CD4-positive, alpha-beta T cell (primary cell): ENCODE measurements at regions of chr5 and their contacts with region 1.

Region 1: GRCh38 chr5:99032234-99033013 is 103.6 kb upstream of the CHD1 start:
- DNase-seq: peak in 9 of 14 experiments; percentile 5 to 67 (median 21)
- ATAC-seq: peak; percentile 25
- H3K4me3 ChIP-seq: peak overlapping the region; percentile 56
- H3K4me3 Mint-ChIP-seq: peak overlapping the region; percentile 90
- H3K27ac ChIP-seq: peak overlapping the region; percentile 29 to 91
- H3K27ac Mint-ChIP-seq: peak overlapping the region; percentile 94
- H3K4me1 ChIP-seq: peaks cover 25% of the 10 kb centered on the region
- H3K4me1 Mint-ChIP-seq: peaks cover 78% of the 10 kb centered on the region
- H3K27me3 ChIP-seq: no peaks in the 10 kb centered on the region
- H3K27me3 Mint-ChIP-seq: no peaks in the 10 kb centered on the region
- CTCF ChIP-seq: peak; percentile 53

Region 2: DNA sequence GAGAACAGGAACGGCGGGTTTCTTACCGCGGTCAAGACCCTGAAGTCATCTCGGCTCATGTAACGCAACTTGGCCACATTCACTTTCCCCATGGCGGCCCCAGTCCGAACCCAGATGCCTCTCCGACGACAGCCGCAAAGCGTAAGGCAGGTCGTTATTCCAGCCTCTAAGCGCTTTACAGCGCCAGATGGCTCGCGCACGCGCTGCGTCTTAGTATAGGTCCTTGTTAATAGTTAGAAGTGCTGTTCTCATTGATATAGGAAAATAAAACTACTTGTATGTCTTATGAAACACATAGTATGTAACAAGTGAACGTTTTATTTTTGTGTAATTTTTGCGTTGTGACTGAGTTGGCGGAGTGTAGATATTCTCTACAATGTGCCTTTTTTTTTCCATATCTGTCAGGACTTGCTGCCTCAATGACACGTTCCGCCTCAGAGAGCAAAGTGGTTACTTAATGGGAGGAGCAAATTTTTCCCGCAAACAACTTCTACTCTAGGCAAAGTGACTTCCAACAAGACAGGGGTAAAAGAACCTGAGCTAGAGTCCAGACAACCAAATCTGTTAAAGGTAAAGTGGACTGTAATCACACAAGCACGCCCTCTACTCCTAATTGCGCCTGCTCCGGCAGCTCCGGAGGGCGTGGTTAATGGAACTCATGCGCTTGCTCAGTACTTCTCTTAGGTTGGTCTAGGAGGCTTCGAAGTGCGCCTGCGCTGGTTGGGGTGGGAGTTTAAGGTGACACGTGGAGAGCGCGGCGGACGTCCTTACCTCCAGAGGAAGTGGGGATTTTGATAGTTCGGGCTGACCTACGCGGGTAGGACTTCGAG is 1849.1 kb before region 1 on chr5 and contains the start of gene RIOK2:
- CTCF ChIA-PET with region 1: no interaction called
- POLR2A ChIA-PET with region 1: no interaction called
- intact Hi-C with region 1: loop called in 1 of 2 experiments (anchors 10 kb)
- DNase-seq: peak; percentile 81 to 96 (median 90)
- ATAC-seq: peak; percentile 91
- H3K4me3 ChIP-seq: peak within 1 kb of the TSS; percentile 73
- H3K4me3 Mint-ChIP-seq: peak within 1 kb of the TSS; percentile 97
- H3K27ac ChIP-seq: peak within 1 kb of the TSS; percentile 90 to 96
- H3K27ac Mint-ChIP-seq: peak within 1 kb of the TSS; percentile 98
- H3K4me1 ChIP-seq: peaks cover 11% of the 10 kb centered on the region
- H3K4me1 Mint-ChIP-seq: peaks cover 44% of the 10 kb centered on the region
- H3K27me3 ChIP-seq: no peaks in the 10 kb centered on the region
- H3K27me3 Mint-ChIP-seq: no peaks in the 10 kb centered on the region
- CTCF ChIP-seq: no peak
- total RNA-seq, gene RIOK2: 25.1 to 26.0 TPM

Region 3: GRCh38 chr5:97936231-97936630 is 1096.2 kb before region 1 on chr5:
- CTCF ChIA-PET with region 1: no interaction called
- POLR2A ChIA-PET with region 1: no interaction called
- intact Hi-C with region 1: no loop called
- DNase-seq: no peak
- ATAC-seq: no peak
- H3K4me3 ChIP-seq: no peak overlapping the region
- H3K4me3 Mint-ChIP-seq: no peak overlapping the region
- H3K27ac ChIP-seq: no peak overlapping the region
- H3K27ac Mint-ChIP-seq: no peak overlapping the region
- H3K4me1 ChIP-seq: no peaks in the 10 kb centered on the region
- H3K4me1 Mint-ChIP-seq: no peaks in the 10 kb centered on the region
- H3K27me3 ChIP-seq: no peaks in the 10 kb centered on the region
- H3K27me3 Mint-ChIP-seq: no peaks in the 10 kb centered on the region
- CTCF ChIP-seq: no peak

Region 4: GRCh38 chr5:98773464-98774191 is 258.8 kb before region 1 on chr5 and contains the start of gene RGMB:
- CTCF ChIA-PET with region 1: no interaction called
- POLR2A ChIA-PET with region 1: no interaction called
- intact Hi-C with region 1: loop called in 1 of 2 experiments (anchors 10 kb)
- DNase-seq: peak; percentile 79 to 94 (median 88)
- ATAC-seq: peak; percentile 85
- H3K4me3 ChIP-seq: peak within 1 kb of the TSS; percentile 74
- H3K4me3 Mint-ChIP-seq: peak within 1 kb of the TSS; percentile 99
- H3K27ac ChIP-seq: peak within 1 kb of the TSS; percentile 10 to 61
- H3K27ac Mint-ChIP-seq: peak within 1 kb of the TSS; percentile 87
- H3K4me1 ChIP-seq: peaks cover 45% of the 10 kb centered on the region
- H3K4me1 Mint-ChIP-seq: peaks cover 72% of the 10 kb centered on the region
- H3K27me3 ChIP-seq: peaks cover 0 to 12% of the 10 kb centered on the region in 2 experiments
- H3K27me3 Mint-ChIP-seq: peaks cover 14% of the 10 kb centered on the region
- CTCF ChIP-seq: no peak
- total RNA-seq, gene RGMB: 15.8 to 15.9 TPM

Region 5: DNA sequence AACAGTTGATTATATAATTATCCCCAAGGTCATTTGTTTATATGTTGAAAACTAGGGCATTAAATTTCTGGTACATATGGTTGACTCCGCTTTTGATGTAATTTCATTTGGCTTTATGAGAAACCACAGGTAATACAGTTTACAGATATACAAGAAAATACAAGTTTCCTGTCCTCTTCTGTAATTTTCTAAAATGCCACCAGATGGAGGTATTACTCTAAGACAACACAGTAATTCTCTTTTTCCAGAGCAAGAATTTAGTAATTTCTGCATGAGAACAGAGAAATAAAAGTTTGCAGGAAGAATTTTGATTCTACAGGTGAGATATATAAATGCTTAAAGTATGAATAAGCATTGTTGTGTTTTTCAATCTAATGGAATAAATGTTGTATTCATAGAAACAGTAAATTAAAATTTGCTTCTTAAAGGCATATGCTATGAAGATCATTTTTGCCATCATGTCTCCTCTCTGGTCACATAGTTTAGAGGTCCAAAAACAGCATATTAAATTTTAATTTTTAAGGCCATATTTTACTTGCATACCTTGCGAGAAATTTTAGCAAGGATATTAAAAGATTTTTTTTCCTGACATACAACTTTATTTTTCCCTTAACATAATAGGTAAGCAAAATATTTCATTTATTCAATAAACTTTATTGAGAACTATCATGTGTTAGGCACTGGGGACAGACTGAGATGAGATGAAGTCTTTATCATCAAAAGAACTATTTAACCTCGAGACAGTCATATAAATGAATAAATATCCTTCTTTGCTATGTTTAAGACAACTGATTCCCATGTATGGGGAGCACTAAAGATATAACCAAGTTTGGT is 126.3 kb before region 1 on chr5:
- CTCF ChIA-PET with region 1: interaction called, 7 read pairs
- POLR2A ChIA-PET with region 1: interaction called, 3 read pairs
- intact Hi-C with region 1: loop called (anchors 1 kb)
- DNase-seq: peak in 3 of 14 experiments; percentile 74 to 76 (median 75)
- ATAC-seq: peak; percentile 68
- H3K4me3 ChIP-seq: no peak overlapping the region
- H3K4me3 Mint-ChIP-seq: no peak overlapping the region
- H3K27ac ChIP-seq: no peak overlapping the region
- H3K27ac Mint-ChIP-seq: peak overlapping the region; percentile 13
- H3K4me1 ChIP-seq: peaks cover 2% of the 10 kb centered on the region
- H3K4me1 Mint-ChIP-seq: peaks cover 46% of the 10 kb centered on the region
- H3K27me3 ChIP-seq: no peaks in the 10 kb centered on the region
- H3K27me3 Mint-ChIP-seq: no peaks in the 10 kb centered on the region
- CTCF ChIP-seq: peak; percentile 88

Region 6: DNA sequence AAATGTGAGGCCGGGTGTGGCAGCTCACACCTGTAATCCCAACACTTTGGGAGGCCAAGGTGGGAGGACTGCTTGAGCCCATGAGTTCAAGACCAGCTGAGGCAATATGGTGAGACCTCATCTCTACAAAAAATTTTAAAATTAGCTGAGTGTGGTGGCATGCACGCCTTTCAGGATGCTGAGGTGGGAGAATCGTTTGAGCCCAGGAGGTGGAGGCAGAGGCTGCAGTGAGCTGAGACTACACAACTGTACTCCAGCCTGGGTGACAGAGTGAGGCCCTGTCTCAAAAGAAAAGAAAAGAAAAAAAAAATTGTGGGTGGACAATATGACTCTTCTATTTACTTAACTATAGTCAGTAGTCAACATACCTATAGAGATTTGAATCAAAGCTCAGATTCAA is 108.5 kb before region 1 on chr5:
- CTCF ChIA-PET with region 1: no interaction called
- POLR2A ChIA-PET with region 1: interaction called, 109 read pairs
- intact Hi-C with region 1: loop called (anchors 2 to 5 kb)
- DNase-seq: peak in 1 of 14 experiments; percentile 30
- ATAC-seq: no peak
- H3K4me3 ChIP-seq: no peak overlapping the region
- H3K4me3 Mint-ChIP-seq: peak overlapping the region; percentile 48
- H3K27ac ChIP-seq: no peak overlapping the region
- H3K27ac Mint-ChIP-seq: peak overlapping the region; percentile 48
- H3K4me1 ChIP-seq: peaks cover 34% of the 10 kb centered on the region
- H3K4me1 Mint-ChIP-seq: peaks cover 75% of the 10 kb centered on the region
- H3K27me3 ChIP-seq: no peaks in the 10 kb centered on the region
- H3K27me3 Mint-ChIP-seq: no peaks in the 10 kb centered on the region
- CTCF ChIP-seq: no peak

Region 7: GRCh38 chr5:99076723-99077640 is 44.6 kb after region 1 on chr5:
- CTCF ChIA-PET with region 1: no interaction called
- POLR2A ChIA-PET with region 1: no interaction called
- intact Hi-C with region 1: no loop called
- DNase-seq: no peak
- ATAC-seq: no peak
- H3K4me3 ChIP-seq: no peak overlapping the region
- H3K4me3 Mint-ChIP-seq: no peak overlapping the region
- H3K27ac ChIP-seq: no peak overlapping the region
- H3K27ac Mint-ChIP-seq: no peak overlapping the region
- H3K4me1 ChIP-seq: no peaks in the 10 kb centered on the region
- H3K4me1 Mint-ChIP-seq: no peaks in the 10 kb centered on the region
- H3K27me3 ChIP-seq: no peaks in the 10 kb centered on the region
- H3K27me3 Mint-ChIP-seq: no peaks in the 10 kb centered on the region
- CTCF ChIP-seq: no peak